ENCODE measurements at regions of chr17 and their contacts with region 1.

Region 1: DNA sequence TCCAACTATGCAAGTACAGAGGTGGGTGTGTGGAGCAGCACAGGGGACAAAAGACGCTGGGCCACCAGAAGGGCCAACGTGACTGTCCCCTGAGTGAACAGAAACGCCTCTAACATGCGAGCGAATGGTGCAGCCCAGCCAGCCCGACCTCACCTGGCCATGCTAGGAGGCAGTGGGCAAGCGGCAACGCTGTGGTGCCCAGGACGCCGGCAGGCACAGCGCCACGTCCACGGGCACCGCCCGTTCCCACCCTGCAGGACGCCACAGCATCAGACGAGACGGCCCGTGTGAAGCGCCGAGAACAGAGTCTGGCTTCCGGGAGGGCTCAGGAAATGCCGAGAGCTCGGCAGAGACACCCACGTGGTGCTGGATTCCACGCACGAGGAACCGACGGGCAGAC is 2.2 kb downstream of the CEP295NL start:
- DNase-seq: no peak
- H3K4me3 ChIP-seq: no peak overlapping the region
- H3K27ac ChIP-seq: no peak overlapping the region
- H3K4me1 ChIP-seq: peaks cover 0 to 4% of the 10 kb centered on the region in 2 donors
- H3K27me3 ChIP-seq: no peaks in the 10 kb centered on the region
- CTCF ChIP-seq: no peak
- POLR2A ChIP-seq: no peak

Region 2: GRCh38 chr17:77619851-77620250 is 1281.0 kb before region 1 on chr17:
- intact Hi-C with region 1: no loop called
- DNase-seq: no peak
- H3K4me3 ChIP-seq: no peak overlapping the region
- H3K27ac ChIP-seq: no peak overlapping the region
- H3K4me1 ChIP-seq: no peaks in the 10 kb centered on the region
- H3K27me3 ChIP-seq: no peaks in the 10 kb centered on the region
- CTCF ChIP-seq: no peak
- POLR2A ChIP-seq: no peak

Region 3: GRCh38 chr17:78923660-78924453 is 23.0 kb after region 1 on chr17:
- intact Hi-C with region 1: loop called (anchors 1 kb)
- DNase-seq: peak; percentile 82
- H3K4me3 ChIP-seq: peak overlapping the region; percentile 79 to 93 (median 82)
- H3K27ac ChIP-seq: peak overlapping the region; percentile 87 to 97
- H3K4me1 ChIP-seq: peaks cover 6 to 11% of the 10 kb centered on the region in 2 donors
- H3K27me3 ChIP-seq: no peaks in the 10 kb centered on the region
- CTCF ChIP-seq: no peak
- POLR2A ChIP-seq: no peak

Measured in breast epithelium (tissue), 4 donors.